Activated CD4-positive, alpha-beta memory T cell treated with anti-CD3 and anti-CD28 coated beads for 36 hours (primary cell): ENCODE measurements at regions of chr2 and their contacts with region 1.

Region 1: GRCh38 chr2:62787386-62787785 is 81.9 kb downstream of the EHBP1 start:
- DNase-seq: no peak
- H3K4me3 Mint-ChIP-seq: no peak overlapping the region
- H3K27ac Mint-ChIP-seq: no peak overlapping the region
- H3K4me1 Mint-ChIP-seq: peaks cover 10% of the 10 kb centered on the region
- H3K27me3 Mint-ChIP-seq: no peaks in the 10 kb centered on the region

Region 2: DNA sequence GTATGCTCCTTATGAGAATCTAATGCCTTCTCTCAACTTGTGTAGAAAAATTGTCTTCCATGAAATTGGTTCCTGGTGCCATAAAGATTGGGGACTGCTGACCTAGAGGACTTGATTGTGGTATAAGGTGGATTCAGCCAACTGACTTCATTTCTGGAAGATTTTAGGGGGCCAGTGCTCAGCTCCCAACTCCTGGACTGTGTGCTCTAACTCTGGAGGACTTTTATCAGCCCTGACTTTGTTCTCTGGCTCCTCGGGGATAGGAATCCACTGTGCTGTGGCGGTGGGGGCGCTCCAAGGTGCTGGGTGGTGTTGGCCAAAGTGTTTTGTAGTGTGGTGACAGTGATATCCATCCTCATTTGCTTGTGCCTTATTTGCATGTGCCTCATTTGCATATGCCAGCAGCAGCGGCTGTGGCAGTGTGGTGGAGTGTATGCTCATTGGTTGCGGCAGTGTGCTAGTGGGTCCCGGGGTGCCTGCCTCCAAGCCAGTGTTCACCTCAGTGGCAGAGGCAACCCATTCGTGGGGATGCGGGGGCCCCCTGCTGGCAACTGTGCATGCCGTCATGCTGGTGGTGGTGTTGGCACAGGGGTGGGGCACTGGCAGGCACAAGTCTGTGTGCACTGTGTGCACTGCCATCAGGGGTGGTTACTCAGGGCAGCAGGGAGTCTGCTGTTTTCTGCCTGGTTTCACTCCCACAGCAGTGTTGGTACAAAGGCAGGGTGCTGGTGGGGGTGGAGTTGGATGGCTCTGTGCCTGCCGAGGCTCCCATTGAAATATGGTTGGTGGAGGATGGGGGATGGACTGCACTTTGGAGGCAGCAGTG is 62.3 kb before region 1 on chr2:
- CTCF ChIA-PET with region 1: no interaction called
- POLR2A ChIA-PET with region 1: no interaction called
- intact Hi-C with region 1: no loop called
- DNase-seq: peak; percentile 42
- H3K4me3 Mint-ChIP-seq: no peak overlapping the region
- H3K27ac Mint-ChIP-seq: no peak overlapping the region
- H3K4me1 Mint-ChIP-seq: peaks cover 9% of the 10 kb centered on the region
- H3K27me3 Mint-ChIP-seq: no peaks in the 10 kb centered on the region

Region 3: GRCh38 chr2:62741954-62742722 is 45.2 kb before region 1 on chr2:
- CTCF ChIA-PET with region 1: no interaction called
- POLR2A ChIA-PET with region 1: no interaction called
- intact Hi-C with region 1: no loop called
- DNase-seq: no peak
- H3K4me3 Mint-ChIP-seq: no peak overlapping the region
- H3K27ac Mint-ChIP-seq: no peak overlapping the region
- H3K4me1 Mint-ChIP-seq: peaks cover 5% of the 10 kb centered on the region
- H3K27me3 Mint-ChIP-seq: no peaks in the 10 kb centered on the region

Region 4: GRCh38 chr2:62806231-62806630 is 18.8 kb after region 1 on chr2:
- CTCF ChIA-PET with region 1: no interaction called
- POLR2A ChIA-PET with region 1: no interaction called
- intact Hi-C with region 1: no loop called
- DNase-seq: no peak
- H3K4me3 Mint-ChIP-seq: no peak overlapping the region
- H3K27ac Mint-ChIP-seq: no peak overlapping the region
- H3K4me1 Mint-ChIP-seq: peaks cover 14% of the 10 kb centered on the region
- H3K27me3 Mint-ChIP-seq: no peaks in the 10 kb centered on the region

Region 5: GRCh38 chr2:62939735-62940491 is 152.5 kb after region 1 on chr2:
- CTCF ChIA-PET with region 1: no interaction called
- POLR2A ChIA-PET with region 1: no interaction called
- intact Hi-C with region 1: no loop called
- DNase-seq: no peak
- H3K4me3 Mint-ChIP-seq: no peak overlapping the region
- H3K27ac Mint-ChIP-seq: no peak overlapping the region
- H3K4me1 Mint-ChIP-seq: no peaks in the 10 kb centered on the region
- H3K27me3 Mint-ChIP-seq: no peaks in the 10 kb centered on the region

Region 6: GRCh38 chr2:63050334-63051041 is 263.1 kb after region 1 on chr2 and contains the start of gene OTX1:
- CTCF ChIA-PET with region 1: interaction called, 3 read pairs
- POLR2A ChIA-PET with region 1: no interaction called
- intact Hi-C with region 1: loop called (anchors 5 kb)
- DNase-seq: peak; percentile 67
- H3K4me3 Mint-ChIP-seq: peak within 1 kb of the TSS; percentile 77
- H3K27ac Mint-ChIP-seq: peak within 1 kb of the TSS; percentile 62
- H3K4me1 Mint-ChIP-seq: peaks cover 65% of the 10 kb centered on the region
- H3K27me3 Mint-ChIP-seq: peaks cover 80% of the 10 kb centered on the region
- total RNA-seq, gene OTX1: not detected